ENCODE measurements at regions of chr6 and their contacts with region 1.

Region 1: DNA sequence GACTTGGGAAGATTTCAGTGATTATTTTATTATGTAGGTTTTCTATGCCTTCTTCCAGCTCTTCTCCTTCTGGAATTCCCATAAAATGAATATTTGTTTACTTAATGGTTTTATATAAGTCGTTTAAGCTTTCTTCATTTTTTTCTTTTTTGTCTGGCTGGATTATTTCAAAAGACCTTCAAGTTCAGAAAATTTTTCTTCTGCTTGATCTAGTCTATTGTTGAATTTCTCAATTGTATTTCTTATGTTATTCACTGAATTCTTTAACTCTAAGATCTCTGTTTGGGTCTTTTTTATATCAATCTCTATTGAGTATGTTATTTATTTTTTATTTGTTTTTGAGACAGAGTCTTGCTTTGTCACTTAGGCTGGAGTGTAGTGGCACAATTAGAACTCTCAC is 117.4 kb downstream of the CEP57L1 start:
- DNase-seq: no peak
- ATAC-seq: no peak

Region 2: GRCh38 chr6:108407904-108408827 is 804.5 kb before region 1 on chr6:
- intact Hi-C with region 1: no loop called
- DNase-seq: no peak
- ATAC-seq: peak; percentile 65

Region 3: DNA sequence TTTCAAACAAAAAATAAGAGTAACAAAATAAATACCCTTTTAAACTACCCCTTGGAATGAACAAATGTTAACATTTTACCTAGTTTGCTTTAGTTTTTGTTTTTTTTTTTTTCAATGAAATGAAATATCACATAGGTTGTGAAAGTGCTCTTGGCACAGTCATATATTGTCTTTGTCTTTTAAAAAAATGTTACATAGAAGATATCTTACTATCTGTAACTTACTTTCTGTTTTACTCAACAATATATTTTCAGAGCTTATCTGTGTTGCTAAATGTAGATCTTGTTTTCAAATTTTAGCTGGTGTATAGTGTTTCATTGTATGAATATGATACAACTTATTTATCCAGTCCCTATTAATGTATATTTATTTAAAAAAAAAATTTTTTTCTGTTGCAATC is 108.7 kb before region 1 on chr6:
- intact Hi-C with region 1: no loop called
- DNase-seq: no peak
- ATAC-seq: no peak

Region 4: DNA sequence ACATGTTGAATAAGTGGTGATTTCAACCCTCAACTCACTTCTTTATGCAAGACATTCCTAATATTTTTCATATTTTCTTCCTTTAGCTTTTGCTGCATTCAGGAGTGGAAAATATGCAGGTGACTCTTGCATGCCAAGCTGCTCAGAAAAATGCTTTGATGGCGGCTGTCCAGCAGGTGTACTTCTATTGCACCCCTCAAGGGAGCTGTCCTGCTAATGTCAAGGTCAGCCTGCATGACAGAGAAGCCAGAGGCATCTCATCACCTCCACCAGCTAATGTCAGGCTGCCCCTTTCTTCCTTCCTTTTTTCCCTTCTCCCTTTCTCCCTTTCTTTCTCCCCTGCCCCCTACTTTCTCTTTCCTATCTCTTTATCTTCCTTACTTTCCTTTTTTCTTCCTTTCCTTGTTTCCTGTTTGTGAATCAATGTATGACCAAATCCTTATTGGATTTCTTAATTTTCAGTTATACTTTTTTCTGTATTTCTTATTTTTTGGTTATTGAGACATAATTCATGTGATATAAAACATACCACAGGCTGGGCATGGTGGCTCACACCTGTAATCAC is 57.4 kb after region 1 on chr6:
- intact Hi-C with region 1: loop called (anchors 10 kb)
- DNase-seq: no peak
- ATAC-seq: no peak

Measured in Right ventricle myocardium superior (tissue), 1 donor.